ENCODE measurements at regions of chr3 and their contacts with region 1.

Region 1: DNA sequence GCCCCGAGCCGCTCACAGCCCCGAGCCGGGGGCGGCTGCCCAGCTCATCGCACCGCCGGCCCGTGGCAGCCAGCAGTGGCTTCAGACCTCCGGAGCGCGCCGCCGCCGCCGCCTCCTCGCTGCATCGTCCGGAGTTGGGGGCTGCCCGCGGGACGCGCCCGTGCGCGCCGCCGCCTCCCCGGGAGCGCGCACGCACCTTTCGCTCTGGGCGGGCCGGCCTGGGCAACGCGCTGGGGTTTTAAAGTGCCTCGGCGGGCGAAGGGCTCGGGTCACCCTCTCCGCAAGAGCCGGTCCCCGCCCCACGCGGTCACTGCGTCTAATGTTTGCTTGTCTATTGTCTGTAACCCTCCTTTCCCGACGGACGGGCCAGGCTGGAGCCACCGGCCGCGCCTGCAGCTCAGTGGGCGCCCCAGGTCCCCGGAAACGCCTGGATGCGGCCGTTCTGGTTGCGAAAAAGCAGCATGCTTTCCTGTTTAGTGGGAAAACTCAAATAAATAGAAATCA is at the start of gene RYK:
- DNase-seq: peak; percentile 55 to 75
- ATAC-seq: peak; percentile 91 to 95
- H3K4me3 ChIP-seq: peak within 1 kb of the TSS; percentile 73 to 99 (median 86)
- H3K27ac ChIP-seq: peak within 1 kb of the TSS; percentile 83 to 96 (median 95)
- H3K4me1 ChIP-seq: peaks cover 10 to 12% of the 10 kb centered on the region in 2 donors
- H3K27me3 ChIP-seq: no peaks in the 10 kb centered on the region
- CTCF ChIP-seq: no peak
- POLR2A ChIP-seq: peak; percentile 65 to 79
- total RNA-seq, gene RYK: 25.8 to 42.4 (median 35.0) TPM

Region 2: GRCh38 chr3:134161898-134162615 is 88.7 kb before region 1 on chr3:
- in situ Hi-C with region 1: no loop called
- intact Hi-C with region 1: no loop called
- DNase-seq: no peak
- ATAC-seq: no peak
- H3K4me3 ChIP-seq: no peak overlapping the region
- H3K27ac ChIP-seq: no peak overlapping the region
- H3K4me1 ChIP-seq: no peaks in the 10 kb centered on the region
- H3K27me3 ChIP-seq: no peaks in the 10 kb centered on the region
- CTCF ChIP-seq: no peak
- POLR2A ChIP-seq: no peak

Region 3: DNA sequence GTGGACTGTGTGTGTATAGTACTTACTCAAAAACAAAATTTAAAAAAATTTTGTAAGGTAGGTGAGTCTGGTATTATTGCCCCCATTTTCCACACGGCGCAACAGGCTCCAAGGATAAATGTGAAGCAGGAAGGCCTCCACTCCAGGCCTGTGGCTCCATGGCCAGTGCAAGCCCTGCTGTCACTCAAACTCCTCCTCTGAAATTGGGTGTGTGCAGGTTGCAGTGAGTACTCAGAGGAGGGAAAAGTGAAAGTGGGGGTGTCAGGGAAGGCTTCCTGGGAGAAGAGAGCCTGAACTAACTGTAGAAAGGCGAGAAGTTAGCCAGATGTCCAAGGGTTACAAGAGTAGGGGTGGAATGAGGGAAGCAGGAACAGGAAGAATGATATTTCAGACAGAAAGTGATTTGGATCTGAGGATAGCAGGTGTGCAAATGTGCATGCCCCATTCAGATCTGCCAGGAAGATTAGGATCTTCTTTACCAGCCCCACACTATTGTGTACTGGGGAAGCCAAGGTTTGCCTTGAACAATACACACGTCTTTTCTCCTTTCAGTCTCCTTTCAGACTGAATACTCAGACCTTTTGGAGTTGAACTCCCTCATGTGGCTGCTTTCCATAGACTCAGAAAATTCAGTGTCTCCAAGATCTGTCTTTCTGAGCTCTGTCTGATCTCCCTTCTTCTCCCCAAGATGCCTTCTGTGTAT is 48.6 kb after region 1 on chr3:
- in situ Hi-C with region 1: no loop called
- intact Hi-C with region 1: loop called (anchors 5 kb)
- DNase-seq: no peak
- ATAC-seq: peak in 1 of 2 donors; percentile 39
- H3K4me3 ChIP-seq: no peak overlapping the region
- H3K27ac ChIP-seq: no peak overlapping the region
- H3K4me1 ChIP-seq: no peaks in the 10 kb centered on the region
- H3K27me3 ChIP-seq: no peaks in the 10 kb centered on the region
- CTCF ChIP-seq: peak in 1 of 5 experiments; percentile 16
- POLR2A ChIP-seq: no peak

Region 4: GRCh38 chr3:134364061-134364935 is 113.5 kb after region 1 on chr3:
- in situ Hi-C with region 1: no loop called
- intact Hi-C with region 1: loop called (anchors 5 kb)
- DNase-seq: peak; percentile 88 to 95
- ATAC-seq: peak; percentile 82 to 87
- H3K4me3 ChIP-seq: peak overlapping the region; percentile 39 to 49 (median 44)
- H3K27ac ChIP-seq: peak overlapping the region; percentile 72 to 99 (median 97)
- H3K4me1 ChIP-seq: peaks cover 81 to 98% of the 10 kb centered on the region in 2 donors
- H3K27me3 ChIP-seq: no peaks in the 10 kb centered on the region
- CTCF ChIP-seq: no peak
- POLR2A ChIP-seq: no peak

Region 5: DNA sequence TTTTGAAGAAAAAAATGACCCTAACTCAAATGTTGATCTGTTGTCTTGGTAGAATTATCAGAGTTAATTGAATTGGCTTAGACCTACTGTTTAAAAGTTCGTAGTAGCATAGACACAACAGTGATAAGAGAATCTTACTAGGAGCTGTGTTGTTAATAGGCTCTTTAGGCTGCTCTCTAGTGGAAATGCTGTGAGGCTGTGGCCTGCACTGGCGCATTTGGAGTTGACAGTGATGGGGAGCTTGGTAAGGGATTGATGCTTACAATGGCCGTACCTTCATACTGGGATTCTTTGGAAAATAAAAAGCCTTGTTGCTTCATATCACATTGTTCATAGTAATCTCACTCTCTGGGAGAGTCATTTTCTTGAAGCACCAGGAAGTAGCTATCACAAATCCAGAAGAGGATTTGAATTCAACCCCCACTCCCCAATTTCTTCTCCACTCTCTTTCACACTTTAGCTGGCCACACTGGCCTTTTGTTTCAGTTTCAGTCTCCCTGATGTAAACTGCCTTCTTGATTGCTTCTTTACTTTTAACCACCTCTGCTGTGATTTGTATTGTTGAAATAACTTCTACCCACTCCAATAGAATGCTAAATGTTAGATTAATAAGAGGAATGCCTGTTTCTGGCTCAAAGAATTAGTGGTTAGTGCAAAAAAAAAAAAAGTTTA is 291.7 kb after region 1 on chr3:
- in situ Hi-C with region 1: no loop called
- intact Hi-C with region 1: no loop called
- DNase-seq: no peak
- ATAC-seq: no peak
- H3K4me3 ChIP-seq: no peak overlapping the region
- H3K27ac ChIP-seq: no peak overlapping the region
- H3K4me1 ChIP-seq: no peaks in the 10 kb centered on the region
- H3K27me3 ChIP-seq: no peaks in the 10 kb centered on the region
- CTCF ChIP-seq: no peak
- POLR2A ChIP-seq: no peak

Measured in gastrocnemius medialis (tissue), 4 donors.